Ovary (tissue), 10 donors: ENCODE measurements at regions of chr11 and their contacts with region 1.

Region 1: DNA sequence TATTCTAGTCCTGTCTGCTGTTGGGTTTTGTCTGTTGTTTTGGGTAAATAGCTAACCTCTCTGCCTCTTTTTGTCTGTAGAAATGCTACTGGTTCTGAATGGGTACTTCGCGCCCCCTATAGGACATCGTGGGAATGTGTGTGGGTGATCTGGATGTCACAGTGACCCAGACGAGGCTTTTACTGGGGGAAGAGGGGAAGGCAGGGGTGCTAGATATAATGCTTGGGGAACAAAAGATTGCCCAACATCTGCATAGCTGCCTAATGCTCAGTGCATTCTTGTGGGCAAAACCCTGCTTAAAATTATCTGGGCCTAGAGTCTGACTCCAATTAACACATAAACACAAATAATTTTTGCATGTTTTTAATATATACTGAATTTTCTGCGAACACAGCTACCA is 57.7 kb downstream of the BMAL1 start:
- DNase-seq: peak; percentile 47 to 74 (median 66)
- H3K4me3 ChIP-seq: no peak overlapping the region
- H3K27ac ChIP-seq: no peak overlapping the region
- H3K4me1 ChIP-seq: peaks cover 18% of the 10 kb centered on the region
- H3K27me3 ChIP-seq: no peaks in the 10 kb centered on the region
- CTCF ChIP-seq: peak; percentile 27 to 57 (median 48)
- EP300 ChIP-seq: no peak
- POLR2A ChIP-seq: no peak

Region 2: GRCh38 chr11:13276832-13277767 is 58.2 kb before region 1 on chr11:
- intact Hi-C with region 1: loop called in 3 of 4 experiments (anchors 5 to 10 kb)
- DNase-seq: peak; percentile 97 to 99 (median 98)
- H3K4me3 ChIP-seq: peak overlapping the region; percentile 93
- H3K27ac ChIP-seq: peak overlapping the region; percentile 89 to 95
- H3K4me1 ChIP-seq: peaks cover 2% of the 10 kb centered on the region
- H3K27me3 ChIP-seq: no peaks in the 10 kb centered on the region
- CTCF ChIP-seq: peak in 1 of 3 donors; percentile 36
- EP300 ChIP-seq: no peak
- POLR2A ChIP-seq: peak; percentile 81

Region 3: DNA sequence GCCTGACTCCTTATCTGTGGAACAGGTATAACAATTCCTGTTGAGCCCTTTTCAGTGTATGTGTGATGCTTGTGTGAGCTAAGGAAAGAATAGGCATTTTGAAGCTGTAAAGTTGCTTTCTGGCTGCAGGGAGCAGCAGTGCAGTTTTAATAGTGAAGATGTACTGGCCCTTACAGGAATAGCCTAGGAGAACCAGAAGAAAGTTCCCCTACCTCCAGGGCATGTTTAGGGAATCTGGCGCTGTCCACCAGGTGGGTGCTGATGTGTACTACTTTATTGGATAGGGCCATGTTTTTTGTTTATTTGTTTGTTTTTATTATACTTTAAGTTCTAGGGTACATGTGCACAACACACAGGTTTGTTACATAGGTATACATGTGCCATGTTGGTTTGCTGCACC is 46.2 kb before region 1 on chr11:
- intact Hi-C with region 1: loop called in 2 of 4 experiments (anchors 5 to 10 kb)
- DNase-seq: no peak
- H3K4me3 ChIP-seq: no peak overlapping the region
- H3K27ac ChIP-seq: no peak overlapping the region
- H3K4me1 ChIP-seq: peaks cover 6% of the 10 kb centered on the region
- H3K27me3 ChIP-seq: no peaks in the 10 kb centered on the region
- CTCF ChIP-seq: no peak
- EP300 ChIP-seq: no peak
- POLR2A ChIP-seq: no peak

Region 4: GRCh38 chr11:13997881-13998280 is 662.6 kb after region 1 on chr11:
- intact Hi-C with region 1: no loop called
- DNase-seq: no peak
- H3K4me3 ChIP-seq: no peak overlapping the region
- H3K27ac ChIP-seq: no peak overlapping the region
- H3K4me1 ChIP-seq: no peaks in the 10 kb centered on the region
- H3K27me3 ChIP-seq: no peaks in the 10 kb centered on the region
- CTCF ChIP-seq: no peak
- EP300 ChIP-seq: no peak
- POLR2A ChIP-seq: no peak